CD8-positive, alpha-beta T cell (primary cell): ENCODE measurements at regions of chr11 and their contacts with region 1.

Region 1: GRCh38 chr11:117327567-117328374 is at the start of gene CEP164:
- DNase-seq: peak; percentile 90 to 97 (median 95)
- ATAC-seq: peak; percentile 90
- H3K4me3 ChIP-seq: peak within 1 kb of the TSS; percentile 64 to 91
- H3K4me3 Mint-ChIP-seq: no peak within 1 kb of the TSS
- H3K27ac ChIP-seq: peak within 1 kb of the TSS; percentile 92 to 94
- H3K27ac Mint-ChIP-seq: no peak within 1 kb of the TSS
- H3K4me1 ChIP-seq: peaks cover 9% of the 10 kb centered on the region
- H3K4me1 Mint-ChIP-seq: peaks cover 9% of the 10 kb centered on the region
- H3K27me3 ChIP-seq: no peaks in the 10 kb centered on the region
- H3K27me3 Mint-ChIP-seq: no peaks in the 10 kb centered on the region
- CTCF ChIP-seq: no peak
- total RNA-seq, gene CEP164: 23.9 to 28.4 TPM

Region 2: GRCh38 chr11:116787786-116788486 is 539.8 kb before region 1 on chr11 and contains the start of gene ZPR1:
- CTCF ChIA-PET with region 1: no interaction called
- POLR2A ChIA-PET with region 1: no interaction called
- intact Hi-C with region 1: loop called in 1 of 2 experiments (anchors 5 kb)
- DNase-seq: peak; percentile 69 to 91 (median 87)
- ATAC-seq: peak; percentile 80
- H3K4me3 ChIP-seq: peak within 1 kb of the TSS; percentile 60 to 94
- H3K4me3 Mint-ChIP-seq: peak within 1 kb of the TSS; percentile 95
- H3K27ac ChIP-seq: peak within 1 kb of the TSS; percentile 80 to 95
- H3K27ac Mint-ChIP-seq: peak within 1 kb of the TSS; percentile 91
- H3K4me1 ChIP-seq: peaks cover 29% of the 10 kb centered on the region
- H3K4me1 Mint-ChIP-seq: peaks cover 54% of the 10 kb centered on the region
- H3K27me3 ChIP-seq: no peaks in the 10 kb centered on the region
- H3K27me3 Mint-ChIP-seq: no peaks in the 10 kb centered on the region
- CTCF ChIP-seq: no peak
- total RNA-seq, gene ZPR1: 132 to 134 TPM

Region 3: GRCh38 chr11:117143871-117144476 is 183.8 kb before region 1 on chr11 and contains the start of gene PAFAH1B2:
- CTCF ChIA-PET with region 1: no interaction called
- POLR2A ChIA-PET with region 1: no interaction called
- intact Hi-C with region 1: loop called (anchors 5 to 10 kb)
- DNase-seq: peak; percentile 87 to 97 (median 95)
- ATAC-seq: peak; percentile 82
- H3K4me3 ChIP-seq: peak within 1 kb of the TSS; percentile 74 to 78
- H3K4me3 Mint-ChIP-seq: peak within 1 kb of the TSS; percentile 95
- H3K27ac ChIP-seq: peak within 1 kb of the TSS; percentile 69 to 75
- H3K27ac Mint-ChIP-seq: peak within 1 kb of the TSS; percentile 95
- H3K4me1 ChIP-seq: peaks cover 16% of the 10 kb centered on the region
- H3K4me1 Mint-ChIP-seq: peaks cover 44% of the 10 kb centered on the region
- H3K27me3 ChIP-seq: peaks cover 0 to 3% of the 10 kb centered on the region in 2 experiments
- H3K27me3 Mint-ChIP-seq: peaks cover 5% of the 10 kb centered on the region
- CTCF ChIP-seq: no peak
- total RNA-seq, gene PAFAH1B2: 52.1 to 55.9 TPM

Region 4: DNA sequence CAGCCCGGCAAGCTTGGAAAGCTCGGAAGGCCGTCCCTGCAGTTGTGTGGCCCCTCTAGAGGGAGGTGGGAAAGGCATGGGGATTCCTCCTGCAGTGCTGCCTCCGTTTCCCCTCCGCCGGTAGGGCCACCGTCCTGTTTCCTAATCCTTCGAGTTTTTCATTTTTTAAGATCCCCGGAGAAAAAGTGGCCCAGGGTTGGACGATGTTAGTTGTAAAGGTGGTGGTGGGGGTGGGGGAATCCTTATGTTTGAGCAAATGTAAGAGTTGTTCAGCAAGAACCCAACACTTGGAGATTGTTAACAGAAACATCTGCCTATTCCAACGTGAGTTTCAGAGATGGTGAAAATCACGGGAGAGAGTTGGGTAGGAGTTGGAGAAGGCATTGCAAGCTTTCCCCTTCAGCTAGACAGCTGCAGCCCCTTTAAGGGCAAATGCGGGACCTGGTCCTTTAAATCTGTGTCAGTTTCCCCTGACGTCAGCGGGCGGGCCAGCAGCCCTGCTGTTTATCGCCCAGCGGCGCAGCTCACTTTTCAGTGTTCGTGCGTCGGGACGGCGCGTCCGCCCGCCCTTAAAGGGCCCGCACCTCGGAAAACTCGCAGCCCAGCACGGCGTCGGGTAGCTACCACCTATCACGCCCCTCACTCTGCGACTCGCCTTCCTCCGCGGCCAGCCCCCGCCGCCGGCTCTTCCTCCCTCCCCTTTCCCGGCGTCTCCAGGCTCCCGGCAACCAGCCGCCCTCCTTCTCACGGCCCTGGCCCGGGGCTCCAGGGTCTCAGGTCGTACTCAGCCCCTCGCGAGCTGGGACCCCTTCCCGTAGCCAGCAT is 149.3 kb before region 1 on chr11 and contains the start of gene SIDT2:
- CTCF ChIA-PET with region 1: no interaction called
- POLR2A ChIA-PET with region 1: interaction called, 3 read pairs
- intact Hi-C with region 1: loop called in 1 of 2 experiments (anchors 2 kb)
- DNase-seq: peak; percentile 78 to 94 (median 90)
- ATAC-seq: peak; percentile 92
- H3K4me3 ChIP-seq: peak within 1 kb of the TSS; percentile 57 to 76
- H3K4me3 Mint-ChIP-seq: peak within 1 kb of the TSS; percentile 96
- H3K27ac ChIP-seq: peak within 1 kb of the TSS; percentile 50 to 80
- H3K27ac Mint-ChIP-seq: peak within 1 kb of the TSS; percentile 97
- H3K4me1 ChIP-seq: peaks cover 24% of the 10 kb centered on the region
- H3K4me1 Mint-ChIP-seq: peaks cover 29% of the 10 kb centered on the region
- H3K27me3 ChIP-seq: no peaks in the 10 kb centered on the region
- H3K27me3 Mint-ChIP-seq: no peaks in the 10 kb centered on the region
- CTCF ChIP-seq: no peak
- total RNA-seq, gene SIDT2: 133 to 134 TPM